Naive thymus-derived CD4-positive, alpha-beta T cell (primary cell): ENCODE measurements at regions of chr19 and their contacts with region 1.

Region 1: DNA sequence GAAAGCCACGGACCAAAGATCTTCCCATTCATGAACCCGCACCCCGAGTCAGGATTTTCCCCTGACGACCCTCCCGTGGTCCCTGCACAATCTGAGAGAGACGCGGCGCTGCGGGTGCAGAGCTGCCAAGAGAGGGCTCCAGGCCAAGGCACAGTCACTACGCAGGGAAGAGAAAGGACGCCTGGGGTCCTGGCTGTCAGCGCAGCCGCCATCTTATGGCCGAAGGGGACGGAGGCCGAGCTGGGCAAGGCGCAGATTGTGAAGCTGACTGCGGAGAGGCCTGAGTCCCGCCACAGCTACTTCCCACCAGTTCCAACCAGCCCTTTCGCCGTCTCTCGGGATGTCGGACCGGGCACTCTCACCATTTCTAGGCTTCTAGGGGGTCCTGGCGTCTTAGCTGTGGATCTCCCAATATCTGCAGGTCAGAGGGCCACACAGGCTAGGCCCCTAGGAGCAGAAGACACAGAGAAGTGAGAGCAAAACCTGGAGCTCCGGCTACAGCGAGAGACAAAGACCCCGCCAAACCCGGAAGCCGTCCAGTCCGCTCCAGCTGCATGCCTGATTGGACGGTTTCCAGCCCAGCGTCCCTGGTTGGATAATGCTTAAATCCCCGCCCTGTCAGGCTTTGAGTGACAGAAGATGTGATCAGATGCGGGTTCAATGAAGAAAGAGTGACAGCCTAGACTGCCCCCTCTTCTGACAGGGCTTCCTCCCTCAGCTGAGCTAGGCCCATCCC is at the start of gene ZNF100:
- DNase-seq: peak; percentile 64 to 88 (median 80)
- ATAC-seq: peak; percentile 98
- H3K4me3 ChIP-seq: peak within 1 kb of the TSS; percentile 97
- H3K4me3 Mint-ChIP-seq: peak within 1 kb of the TSS; percentile 92 to 98 (median 97)
- H3K27ac ChIP-seq: peak within 1 kb of the TSS; percentile 81
- H3K27ac Mint-ChIP-seq: peak within 1 kb of the TSS; percentile 89 to 98 (median 92)
- H3K4me1 ChIP-seq: no peaks in the 10 kb centered on the region
- H3K4me1 Mint-ChIP-seq: peaks cover 7 to 43% (median 27%) of the 10 kb centered on the region in 7 donors
- H3K27me3 ChIP-seq: no peaks in the 10 kb centered on the region
- H3K27me3 Mint-ChIP-seq: no peaks in the 10 kb centered on the region
- total RNA-seq, gene ZNF100: 9.5 to 22.5 (median 18.4) TPM

Region 2: GRCh38 chr19:21604351-21604926 is 162.8 kb before region 1 on chr19:
- CTCF ChIA-PET with region 1: no interaction called
- POLR2A ChIA-PET with region 1: interaction called, 4 read pairs
- intact Hi-C with region 1: loop called in 1 of 2 experiments (anchors 10 kb)
- DNase-seq: peak in 6 of 9 donors; percentile 24 to 55 (median 49)
- ATAC-seq: peak; percentile 67
- H3K4me3 ChIP-seq: peak overlapping the region; percentile 65
- H3K4me3 Mint-ChIP-seq: peak overlapping the region; percentile 80 to 96 (median 92)
- H3K27ac ChIP-seq: peak overlapping the region; percentile 73
- H3K27ac Mint-ChIP-seq: peak overlapping the region; percentile 84 to 97 (median 96)
- H3K4me1 ChIP-seq: peaks cover 0 to 9% of the 10 kb centered on the region in 2 donors
- H3K4me1 Mint-ChIP-seq: peaks cover 17 to 31% (median 21%) of the 10 kb centered on the region in 7 donors
- H3K27me3 ChIP-seq: no peaks in the 10 kb centered on the region
- H3K27me3 Mint-ChIP-seq: no peaks in the 10 kb centered on the region

Region 3: DNA sequence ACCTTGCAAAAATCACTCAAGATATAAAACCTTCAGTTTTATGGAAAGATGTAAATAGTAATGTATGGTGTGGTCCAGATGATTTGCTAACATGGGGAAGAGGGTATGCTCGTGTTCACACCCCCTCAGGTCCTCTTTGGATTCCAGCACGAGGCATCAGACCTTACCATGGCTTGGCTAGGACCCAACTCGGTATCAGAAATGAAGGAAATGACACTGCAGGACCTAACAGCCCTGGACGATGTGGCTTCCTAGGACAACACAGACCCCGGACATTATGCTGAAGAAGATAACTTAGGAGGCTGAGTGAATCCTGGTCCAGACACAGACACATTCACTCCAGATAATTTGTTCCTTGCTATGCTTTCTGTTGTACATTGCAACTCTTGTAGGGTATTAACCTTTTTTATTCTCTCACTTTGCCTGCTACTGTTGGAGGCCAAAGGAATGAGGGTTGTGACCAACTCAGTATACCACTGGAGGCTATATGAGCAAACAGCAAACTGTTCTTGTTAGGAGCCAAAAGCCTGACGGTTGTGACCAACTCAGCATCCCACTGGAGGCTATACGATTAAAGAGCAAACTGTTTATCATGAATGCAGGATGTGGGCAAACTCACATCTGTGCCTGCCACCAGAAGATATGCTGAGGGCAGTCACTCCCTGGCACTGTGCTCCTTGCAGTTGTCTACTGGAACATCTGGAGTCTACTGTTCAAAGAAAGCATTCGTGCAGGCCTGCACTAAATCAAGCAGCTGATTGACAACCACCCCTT is 140.1 kb before region 1 on chr19:
- CTCF ChIA-PET with region 1: no interaction called
- POLR2A ChIA-PET with region 1: no interaction called
- intact Hi-C with region 1: no loop called
- DNase-seq: no peak
- ATAC-seq: no peak
- H3K4me3 ChIP-seq: no peak overlapping the region
- H3K4me3 Mint-ChIP-seq: no peak overlapping the region
- H3K27ac ChIP-seq: no peak overlapping the region
- H3K27ac Mint-ChIP-seq: peak overlapping the region in 1 of 9 donors; percentile 55
- H3K4me1 ChIP-seq: no peaks in the 10 kb centered on the region
- H3K4me1 Mint-ChIP-seq: peaks cover 0 to 10% (median 0%) of the 10 kb centered on the region in 7 donors
- H3K27me3 ChIP-seq: no peaks in the 10 kb centered on the region
- H3K27me3 Mint-ChIP-seq: no peaks in the 10 kb centered on the region

Region 4: DNA sequence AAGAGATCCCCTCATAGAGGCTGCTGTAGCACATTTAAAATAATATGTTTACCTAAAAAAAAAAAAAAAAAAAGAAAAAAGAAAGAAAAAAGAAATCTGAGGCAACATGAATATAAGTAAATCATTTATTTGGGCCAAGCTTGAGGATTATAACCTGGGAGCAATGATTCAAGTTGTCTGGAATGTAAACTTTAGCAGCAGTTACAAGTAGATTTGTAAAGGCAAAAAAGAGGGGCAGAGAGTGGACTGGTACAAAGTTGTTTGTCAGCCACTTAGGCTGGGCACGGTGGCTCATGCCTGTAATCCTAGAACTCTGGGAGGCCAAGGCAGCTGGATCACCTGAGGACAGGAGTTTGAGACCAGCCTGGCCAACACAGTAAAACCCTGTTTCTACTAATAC is 57.4 kb after region 1 on chr19:
- CTCF ChIA-PET with region 1: no interaction called
- POLR2A ChIA-PET with region 1: no interaction called
- intact Hi-C with region 1: no loop called
- DNase-seq: no peak
- ATAC-seq: no peak
- H3K4me3 ChIP-seq: no peak overlapping the region
- H3K4me3 Mint-ChIP-seq: no peak overlapping the region
- H3K27ac ChIP-seq: no peak overlapping the region
- H3K27ac Mint-ChIP-seq: no peak overlapping the region
- H3K4me1 ChIP-seq: no peaks in the 10 kb centered on the region
- H3K4me1 Mint-ChIP-seq: peaks cover 0 to 15% (median 3%) of the 10 kb centered on the region in 7 donors
- H3K27me3 ChIP-seq: no peaks in the 10 kb centered on the region
- H3K27me3 Mint-ChIP-seq: no peaks in the 10 kb centered on the region

Region 5: DNA sequence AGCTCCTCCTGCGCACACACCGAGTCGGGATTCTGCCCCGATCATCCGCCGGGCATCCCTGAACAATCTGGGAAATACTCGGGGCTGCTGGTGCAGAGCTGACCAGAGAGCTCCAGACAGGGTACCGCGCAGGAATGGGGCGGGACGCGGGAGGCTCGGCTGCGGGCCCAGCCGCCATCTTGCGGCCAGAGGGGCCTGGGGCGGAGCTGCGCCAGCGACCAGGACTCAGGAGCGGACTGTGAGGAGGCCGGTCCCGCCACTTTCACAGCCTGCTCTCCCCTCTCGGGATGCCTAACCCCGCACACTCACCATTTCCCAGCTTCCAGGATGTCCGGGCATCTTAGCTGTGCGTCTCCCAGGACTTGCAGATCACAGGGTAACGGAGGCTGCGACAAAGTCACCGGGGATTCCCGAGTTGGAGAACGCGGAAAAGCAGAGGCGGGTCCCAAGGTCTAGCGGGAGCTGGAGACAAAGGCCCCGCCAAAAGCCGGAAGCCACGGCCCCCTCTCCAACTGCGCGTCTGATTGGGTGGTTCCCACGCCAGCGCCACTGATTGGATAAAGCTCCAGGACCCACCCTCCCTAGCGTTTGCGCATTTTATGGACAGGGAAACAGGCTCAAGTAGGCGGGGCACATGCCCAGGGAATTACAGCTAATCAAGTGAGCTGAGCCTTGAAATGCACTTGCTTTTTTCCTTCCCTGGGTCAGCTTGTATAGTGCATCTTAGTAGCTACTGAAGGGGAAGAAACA is 84.5 kb after region 1 on chr19:
- CTCF ChIA-PET with region 1: no interaction called
- POLR2A ChIA-PET with region 1: interaction called, 21 read pairs
- intact Hi-C with region 1: loop called (anchors 1 to 5 kb)
- DNase-seq: peak; percentile 71 to 90 (median 88)
- ATAC-seq: peak; percentile 99
- H3K4me3 ChIP-seq: peak overlapping the region; percentile 98
- H3K4me3 Mint-ChIP-seq: peak overlapping the region; percentile 89 to 96 (median 92)
- H3K27ac ChIP-seq: peak overlapping the region; percentile 90
- H3K27ac Mint-ChIP-seq: peak overlapping the region; percentile 68 to 96 (median 92)
- H3K4me1 ChIP-seq: peaks cover 6 to 10% of the 10 kb centered on the region in 2 donors
- H3K4me1 Mint-ChIP-seq: peaks cover 8 to 34% (median 27%) of the 10 kb centered on the region in 7 donors
- H3K27me3 ChIP-seq: no peaks in the 10 kb centered on the region
- H3K27me3 Mint-ChIP-seq: peaks cover 0 to 1% (median 0%) of the 10 kb centered on the region in 5 donors

Region 6: GRCh38 chr19:21891081-21891480 is 123.8 kb after region 1 on chr19:
- CTCF ChIA-PET with region 1: no interaction called
- POLR2A ChIA-PET with region 1: no interaction called
- intact Hi-C with region 1: loop called in 1 of 2 experiments (anchors 5 kb)
- DNase-seq: no peak
- ATAC-seq: no peak
- H3K4me3 ChIP-seq: no peak overlapping the region
- H3K4me3 Mint-ChIP-seq: no peak overlapping the region
- H3K27ac ChIP-seq: no peak overlapping the region
- H3K27ac Mint-ChIP-seq: no peak overlapping the region
- H3K4me1 ChIP-seq: no peaks in the 10 kb centered on the region
- H3K4me1 Mint-ChIP-seq: peaks cover 0 to 3% (median 0%) of the 10 kb centered on the region in 7 donors
- H3K27me3 ChIP-seq: no peaks in the 10 kb centered on the region
- H3K27me3 Mint-ChIP-seq: no peaks in the 10 kb centered on the region

Region 7: DNA sequence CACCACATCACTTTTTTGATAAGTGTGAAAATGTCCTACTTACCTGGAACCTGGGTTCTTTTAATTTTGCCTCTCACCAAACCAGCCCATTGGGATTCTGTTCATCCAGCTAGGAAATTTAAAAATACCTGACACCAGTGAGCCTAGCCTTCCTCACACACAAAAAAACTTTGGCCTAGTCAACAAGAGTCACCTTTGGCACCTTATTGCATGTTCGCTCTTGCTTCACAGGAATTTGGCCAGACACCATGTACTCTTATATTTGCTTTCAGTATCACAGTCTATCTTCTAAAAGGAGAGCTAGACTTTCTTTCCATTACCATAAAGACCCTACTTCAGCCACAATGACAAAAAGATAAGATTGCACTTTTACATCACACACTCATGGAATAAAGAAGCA is 350.9 kb after region 1 on chr19:
- CTCF ChIA-PET with region 1: no interaction called
- POLR2A ChIA-PET with region 1: no interaction called
- intact Hi-C with region 1: no loop called
- DNase-seq: no peak
- ATAC-seq: no peak
- H3K4me3 ChIP-seq: no peak overlapping the region
- H3K4me3 Mint-ChIP-seq: no peak overlapping the region
- H3K27ac ChIP-seq: no peak overlapping the region
- H3K27ac Mint-ChIP-seq: no peak overlapping the region
- H3K4me1 ChIP-seq: no peaks in the 10 kb centered on the region
- H3K4me1 Mint-ChIP-seq: no peaks in the 10 kb centered on the region
- H3K27me3 ChIP-seq: no peaks in the 10 kb centered on the region
- H3K27me3 Mint-ChIP-seq: no peaks in the 10 kb centered on the region

Region 8: DNA sequence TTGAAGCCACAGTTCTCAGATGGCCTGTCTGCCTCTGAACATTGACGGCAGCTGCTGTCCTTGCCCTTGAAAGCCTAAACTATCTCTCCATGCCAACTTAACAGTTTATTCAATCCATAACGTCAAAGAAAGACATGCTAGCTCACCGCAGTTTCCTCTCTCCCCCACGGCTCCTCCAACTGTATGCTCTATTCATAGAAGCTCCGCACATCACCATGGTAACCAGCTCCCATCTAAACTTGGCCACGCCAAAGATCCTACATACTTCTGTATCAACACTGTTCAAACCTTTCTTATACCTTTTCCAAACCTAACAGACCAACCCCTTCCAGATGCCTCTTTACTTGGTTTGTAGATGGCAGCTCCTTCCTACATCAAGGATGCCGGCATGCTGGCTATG is 1579.5 kb after region 1 on chr19:
- CTCF ChIA-PET with region 1: no interaction called
- POLR2A ChIA-PET with region 1: no interaction called
- intact Hi-C with region 1: no loop called
- DNase-seq: no peak
- ATAC-seq: no peak
- H3K4me3 ChIP-seq: no peak overlapping the region
- H3K4me3 Mint-ChIP-seq: peak overlapping the region in 5 of 10 donors; percentile 4 to 23 (median 20)
- H3K27ac ChIP-seq: no peak overlapping the region
- H3K27ac Mint-ChIP-seq: no peak overlapping the region
- H3K4me1 ChIP-seq: no peaks in the 10 kb centered on the region
- H3K4me1 Mint-ChIP-seq: peaks cover 0 to 28% (median 12%) of the 10 kb centered on the region in 7 donors
- H3K27me3 ChIP-seq: no peaks in the 10 kb centered on the region
- H3K27me3 Mint-ChIP-seq: no peaks in the 10 kb centered on the region